ENCODE measurements at regions of chr17 and their contacts with region 1.

Region 1: DNA sequence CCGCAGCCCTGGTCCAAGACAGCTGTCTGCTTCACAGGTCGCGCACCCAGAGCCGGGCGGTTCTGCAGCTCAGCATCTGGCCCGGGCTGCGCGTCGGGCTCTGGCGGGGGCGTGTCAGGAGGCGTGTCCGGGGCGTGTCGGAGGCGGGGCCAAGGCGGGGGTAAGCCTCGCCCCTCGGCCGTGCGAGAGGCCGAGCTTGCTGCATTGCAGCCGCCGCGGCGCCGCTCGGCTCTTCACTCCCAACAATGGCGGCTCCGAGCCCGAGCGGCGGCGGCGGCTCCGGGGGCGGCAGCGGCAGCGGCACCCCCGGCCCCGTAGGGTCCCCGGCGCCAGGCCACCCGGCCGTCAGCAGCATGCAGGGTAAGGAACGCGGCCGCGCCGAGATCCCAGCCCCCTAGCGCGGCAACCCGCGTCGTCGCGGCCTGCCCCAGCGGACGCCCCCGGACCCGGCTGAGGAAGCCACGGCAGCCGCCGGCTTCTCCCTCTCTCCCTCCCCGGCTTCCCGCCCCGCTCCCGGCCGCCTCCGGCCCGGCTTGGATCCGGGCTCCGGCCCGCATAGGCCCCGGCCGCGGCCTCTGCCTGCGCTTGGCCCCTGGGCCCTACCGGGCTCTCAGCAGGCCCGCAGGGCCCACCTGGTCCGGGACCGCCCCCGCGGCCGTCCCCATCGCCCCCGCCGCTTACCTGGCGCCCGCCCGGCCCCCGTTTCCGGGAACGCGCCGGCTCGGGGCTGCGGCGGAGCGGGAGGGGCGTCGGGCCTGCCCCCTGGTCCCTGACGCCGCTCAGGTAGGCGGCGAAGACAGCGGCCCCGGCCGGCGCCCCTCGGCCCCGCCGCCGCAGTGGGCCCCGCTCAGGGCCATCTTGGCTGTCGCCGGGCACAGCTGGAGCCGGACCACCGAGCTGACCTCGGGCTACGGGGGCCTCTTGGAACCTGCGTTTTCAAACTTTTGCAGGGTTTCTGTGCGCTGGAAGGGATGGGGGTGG is at the start of gene MAP2K4:
- DNase-seq: peak; percentile 92
- ATAC-seq: peak; percentile 96
- H3K4me3 Mint-ChIP-seq: peak within 1 kb of the TSS; percentile 80
- H3K27ac Mint-ChIP-seq: peak within 1 kb of the TSS; percentile 69
- H3K4me1 Mint-ChIP-seq: peaks cover 43% of the 10 kb centered on the region
- H3K27me3 Mint-ChIP-seq: peaks cover 6% of the 10 kb centered on the region
- total RNA-seq, gene MAP2K4: 43.2 to 45.3 TPM

Region 2: GRCh38 chr17:12055889-12056288 is 35.0 kb after region 1 on chr17:
- CTCF ChIA-PET with region 1: interaction called, 3 read pairs
- POLR2A ChIA-PET with region 1: interaction called, 11 read pairs
- DNase-seq: no peak
- ATAC-seq: peak; percentile 56
- H3K4me3 Mint-ChIP-seq: peak overlapping the region; percentile 67
- H3K27ac Mint-ChIP-seq: peak overlapping the region; percentile 87
- H3K4me1 Mint-ChIP-seq: peaks cover 71% of the 10 kb centered on the region
- H3K27me3 Mint-ChIP-seq: no peaks in the 10 kb centered on the region

Region 3: GRCh38 chr17:12180644-12181261 is 159.8 kb after region 1 on chr17:
- CTCF ChIA-PET with region 1: no interaction called
- POLR2A ChIA-PET with region 1: no interaction called
- DNase-seq: peak; percentile 43
- ATAC-seq: no peak
- H3K4me3 Mint-ChIP-seq: no peak overlapping the region
- H3K27ac Mint-ChIP-seq: no peak overlapping the region
- H3K4me1 Mint-ChIP-seq: no peaks in the 10 kb centered on the region
- H3K27me3 Mint-ChIP-seq: no peaks in the 10 kb centered on the region